ENCODE measurements at regions of chr5 and their contacts with region 1.

Region 1: DNA sequence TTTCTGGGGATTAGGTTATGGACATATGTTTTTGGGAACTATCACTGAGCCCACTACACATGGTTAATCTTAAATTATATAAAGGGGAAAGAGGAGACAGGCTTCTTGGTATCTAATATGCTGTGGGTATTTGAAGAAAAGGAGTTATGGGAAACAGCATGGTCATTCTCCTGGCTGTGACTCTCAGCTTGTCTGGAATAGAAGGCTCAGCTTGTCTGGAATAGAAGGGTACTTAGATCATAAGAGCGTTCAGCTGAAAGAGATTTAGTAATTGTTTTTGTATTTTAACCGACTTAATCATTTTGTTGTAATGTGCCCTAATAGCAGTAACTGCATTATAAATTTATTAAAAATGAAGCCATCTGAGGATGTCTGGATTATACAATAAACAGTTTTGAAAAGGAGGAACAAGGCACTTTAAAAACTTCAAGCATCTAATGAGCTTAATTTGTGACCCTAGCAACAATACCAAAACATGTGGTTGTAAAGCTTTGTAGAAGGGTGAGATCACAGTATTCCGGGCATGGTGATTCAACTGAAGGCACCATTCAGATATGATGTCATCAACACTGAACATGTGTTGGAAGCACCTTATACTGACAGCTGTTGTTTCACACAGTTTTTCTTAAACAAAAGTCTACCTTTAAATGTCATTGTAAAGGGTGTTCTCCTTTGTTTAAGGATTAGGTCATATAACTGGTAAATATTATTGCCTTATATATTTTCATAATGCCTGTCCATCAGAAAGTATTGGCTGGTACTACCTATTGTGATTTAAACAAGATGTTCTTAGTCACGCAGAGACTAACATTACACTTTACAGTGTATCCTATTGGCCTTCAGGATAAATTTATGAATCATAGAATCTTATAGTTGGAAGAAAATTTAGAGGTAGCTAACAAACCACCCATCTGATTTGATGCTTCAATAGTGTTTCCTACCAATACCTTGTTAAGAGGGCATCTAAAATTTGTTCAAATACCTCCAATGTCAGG is 2174.1 kb upstream of the WWC1 start:
- DNase-seq: no peak
- H3K4me3 ChIP-seq: no peak overlapping the region
- H3K27ac ChIP-seq: no peak overlapping the region
- H3K4me1 ChIP-seq: no peaks in the 10 kb centered on the region
- H3K27me3 ChIP-seq: no peaks in the 10 kb centered on the region
- CTCF ChIP-seq: no peak
- POLR2A ChIP-seq: no peak

Region 2: GRCh38 chr5:166618526-166618925 is 501.2 kb after region 1 on chr5:
- intact Hi-C with region 1: loop called (anchors 5 kb)
- DNase-seq: no peak
- H3K4me3 ChIP-seq: no peak overlapping the region
- H3K27ac ChIP-seq: no peak overlapping the region
- H3K4me1 ChIP-seq: no peaks in the 10 kb centered on the region
- H3K27me3 ChIP-seq: no peaks in the 10 kb centered on the region
- CTCF ChIP-seq: no peak
- POLR2A ChIP-seq: no peak